Activated CD4-positive, alpha-beta memory T cell treated with anti-CD3 and anti-CD28 coated beads for 36 hours (primary cell): ENCODE measurements at regions of chr17 and their contacts with region 1.

Region 1: GRCh38 chr17:47698749-47699535 is 5.0 kb downstream of the TBKBP1 start:
- DNase-seq: peak; percentile 92
- H3K4me3 Mint-ChIP-seq: no peak overlapping the region
- H3K27ac Mint-ChIP-seq: peak overlapping the region; percentile 65
- H3K4me1 Mint-ChIP-seq: peaks cover 60% of the 10 kb centered on the region
- H3K27me3 Mint-ChIP-seq: no peaks in the 10 kb centered on the region

Region 2: DNA sequence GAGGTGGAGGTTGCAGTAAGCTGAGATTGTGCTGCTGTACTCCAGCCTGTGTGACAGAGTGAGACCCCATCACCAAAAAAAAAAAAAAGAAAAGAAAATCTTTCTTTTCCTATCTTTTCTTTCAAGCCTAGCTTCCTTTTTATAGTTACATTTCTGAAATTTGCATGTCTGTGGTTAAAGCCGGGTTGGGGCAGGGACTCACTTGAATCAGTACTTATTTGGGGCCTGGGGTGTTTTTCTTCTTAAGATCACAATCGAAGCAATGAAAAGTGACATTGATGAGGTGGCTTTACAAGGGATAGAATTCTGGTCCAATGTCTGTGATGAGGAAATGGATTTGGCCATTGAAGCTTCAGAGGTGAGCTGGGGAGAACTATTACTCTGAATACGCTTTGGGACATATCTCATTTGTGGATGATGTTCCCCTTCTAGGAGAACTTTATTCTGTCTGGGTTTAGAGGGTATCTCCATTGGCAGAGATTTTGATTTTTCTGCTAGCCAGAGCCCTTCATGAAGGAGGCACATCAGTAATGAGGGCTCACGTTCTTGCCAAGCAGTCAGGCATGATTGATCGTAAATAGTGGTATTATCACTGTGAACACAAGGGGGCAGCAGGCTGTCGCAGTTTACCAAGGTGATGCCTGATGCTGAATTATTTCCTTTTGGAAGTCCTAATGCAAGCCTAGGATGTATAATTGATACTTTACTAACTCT is 34.9 kb before region 1 on chr17:
- CTCF ChIA-PET with region 1: interaction called, 7 read pairs
- POLR2A ChIA-PET with region 1: no interaction called
- intact Hi-C with region 1: loop called (anchors 5 kb)
- DNase-seq: peak; percentile 71
- H3K4me3 Mint-ChIP-seq: no peak overlapping the region
- H3K27ac Mint-ChIP-seq: peak overlapping the region; percentile 80
- H3K4me1 Mint-ChIP-seq: peaks cover 31% of the 10 kb centered on the region
- H3K27me3 Mint-ChIP-seq: no peaks in the 10 kb centered on the region

Region 3: GRCh38 chr17:47720754-47721533 is 22.0 kb after region 1 on chr17:
- CTCF ChIA-PET with region 1: interaction called, 135 read pairs
- POLR2A ChIA-PET with region 1: interaction called, 111 read pairs
- intact Hi-C with region 1: loop called (anchors 1 kb)
- DNase-seq: peak; percentile 99
- H3K4me3 Mint-ChIP-seq: peak overlapping the region; percentile 72
- H3K27ac Mint-ChIP-seq: peak overlapping the region; percentile 94
- H3K4me1 Mint-ChIP-seq: peaks cover 92% of the 10 kb centered on the region
- H3K27me3 Mint-ChIP-seq: no peaks in the 10 kb centered on the region

Region 4: GRCh38 chr17:47742319-47743181 is 43.6 kb after region 1 on chr17:
- CTCF ChIA-PET with region 1: interaction called, 81 read pairs
- POLR2A ChIA-PET with region 1: interaction called, 5 read pairs
- intact Hi-C with region 1: no loop called
- DNase-seq: peak; percentile 48
- H3K4me3 Mint-ChIP-seq: no peak overlapping the region
- H3K27ac Mint-ChIP-seq: peak overlapping the region; percentile 75
- H3K4me1 Mint-ChIP-seq: peaks cover 42% of the 10 kb centered on the region
- H3K27me3 Mint-ChIP-seq: no peaks in the 10 kb centered on the region

Region 5: GRCh38 chr17:47789611-47790561 is 90.9 kb after region 1 on chr17:
- CTCF ChIA-PET with region 1: interaction called, 34 read pairs
- POLR2A ChIA-PET with region 1: no interaction called
- intact Hi-C with region 1: no loop called
- DNase-seq: peak; percentile 78
- H3K4me3 Mint-ChIP-seq: peak overlapping the region; percentile 66
- H3K27ac Mint-ChIP-seq: no peak overlapping the region
- H3K4me1 Mint-ChIP-seq: peaks cover 11% of the 10 kb centered on the region
- H3K27me3 Mint-ChIP-seq: peaks cover 43% of the 10 kb centered on the region